Endothelial cell of umbilical vein (primary cell): ENCODE measurements at regions of chr6 and their contacts with region 1.

Region 1: DNA sequence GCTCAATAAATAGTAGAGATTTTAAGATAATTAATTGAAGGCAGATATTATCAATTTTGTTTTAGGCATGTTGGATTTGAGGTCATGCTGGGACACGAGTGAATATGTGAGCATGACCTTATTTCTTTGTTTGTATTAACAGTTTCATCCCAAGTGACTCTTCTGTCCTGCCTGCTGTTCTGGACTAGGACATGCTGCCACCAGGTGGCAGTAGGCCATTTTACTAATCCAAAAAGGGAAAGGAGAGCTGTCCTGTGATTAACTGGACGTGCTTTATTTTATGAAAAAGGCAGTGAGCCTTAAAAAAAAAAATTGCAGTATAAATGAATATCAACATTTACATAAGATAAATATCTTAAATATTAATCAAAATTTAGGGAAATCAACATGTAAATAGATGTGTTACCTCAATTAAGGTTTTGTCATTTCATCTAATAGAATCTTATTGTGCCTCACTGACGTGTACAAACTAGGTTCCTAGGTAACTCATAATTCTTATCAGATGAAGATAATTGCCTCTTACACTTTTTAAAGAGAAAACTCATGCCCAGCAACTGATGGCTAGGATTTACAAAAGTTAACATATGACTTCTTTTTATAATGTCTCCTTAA is 49.8 kb downstream of the FRK start:
- DNase-seq: peak; percentile 73
- H3K4me3 ChIP-seq: no peak overlapping the region
- H3K27ac ChIP-seq: no peak overlapping the region
- H3K4me1 ChIP-seq: peaks cover 11% of the 10 kb centered on the region
- H3K27me3 ChIP-seq: no peaks in the 10 kb centered on the region
- CTCF ChIP-seq: peak; percentile 72 to 81
- POLR2A ChIP-seq: no peak

Region 2: GRCh38 chr6:115287467-115287866 is 723.4 kb before region 1 on chr6:
- CTCF ChIA-PET with region 1: no interaction called
- POLR2A ChIA-PET with region 1: no interaction called
- dilution Hi-C with region 1: no loop called
- intact Hi-C with region 1: no loop called
- DNase-seq: no peak
- H3K4me3 ChIP-seq: no peak overlapping the region
- H3K27ac ChIP-seq: no peak overlapping the region
- H3K4me1 ChIP-seq: no peaks in the 10 kb centered on the region
- H3K27me3 ChIP-seq: no peaks in the 10 kb centered on the region
- CTCF ChIP-seq: no peak
- POLR2A ChIP-seq: no peak

Region 3: GRCh38 chr6:115982453-115982852 is 28.4 kb before region 1 on chr6:
- CTCF ChIA-PET with region 1: no interaction called
- POLR2A ChIA-PET with region 1: no interaction called
- dilution Hi-C with region 1: no loop called
- intact Hi-C with region 1: no loop called
- DNase-seq: no peak
- H3K4me3 ChIP-seq: no peak overlapping the region
- H3K27ac ChIP-seq: no peak overlapping the region
- H3K4me1 ChIP-seq: no peaks in the 10 kb centered on the region
- H3K27me3 ChIP-seq: no peaks in the 10 kb centered on the region
- CTCF ChIP-seq: no peak
- POLR2A ChIP-seq: no peak

Region 4: DNA sequence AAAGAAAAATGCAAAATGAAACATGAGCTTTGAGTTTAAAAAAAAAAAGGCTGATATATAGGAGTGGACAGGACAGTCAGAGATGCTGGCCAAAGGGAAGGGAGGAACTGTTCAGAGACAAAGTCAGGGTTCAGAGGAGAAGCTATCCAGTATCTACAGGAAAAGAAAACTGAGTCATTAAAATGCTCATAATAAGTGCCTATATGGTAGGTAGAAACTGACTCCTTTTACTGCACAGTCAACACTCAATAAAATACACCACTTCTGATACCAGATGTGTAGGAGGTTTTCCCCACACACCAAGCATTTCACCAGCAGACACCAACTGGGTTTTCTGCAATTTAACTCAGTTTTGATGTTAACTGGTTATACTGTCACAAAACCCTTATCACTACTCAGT is 16.9 kb after region 1 on chr6:
- CTCF ChIA-PET with region 1: interaction called, 13 read pairs
- POLR2A ChIA-PET with region 1: no interaction called
- dilution Hi-C with region 1: no loop called
- intact Hi-C with region 1: no loop called
- DNase-seq: no peak
- H3K4me3 ChIP-seq: no peak overlapping the region
- H3K27ac ChIP-seq: no peak overlapping the region
- H3K4me1 ChIP-seq: no peaks in the 10 kb centered on the region
- H3K27me3 ChIP-seq: no peaks in the 10 kb centered on the region
- CTCF ChIP-seq: no peak
- POLR2A ChIP-seq: no peak

Region 5: GRCh38 chr6:116073765-116074419 is 63.0 kb after region 1 on chr6:
- CTCF ChIA-PET with region 1: interaction called, 11 read pairs
- POLR2A ChIA-PET with region 1: no interaction called
- dilution Hi-C with region 1: no loop called
- intact Hi-C with region 1: no loop called
- DNase-seq: peak; percentile 20
- H3K4me3 ChIP-seq: no peak overlapping the region
- H3K27ac ChIP-seq: no peak overlapping the region
- H3K4me1 ChIP-seq: no peaks in the 10 kb centered on the region
- H3K27me3 ChIP-seq: no peaks in the 10 kb centered on the region
- CTCF ChIP-seq: no peak
- POLR2A ChIP-seq: no peak

Region 6: DNA sequence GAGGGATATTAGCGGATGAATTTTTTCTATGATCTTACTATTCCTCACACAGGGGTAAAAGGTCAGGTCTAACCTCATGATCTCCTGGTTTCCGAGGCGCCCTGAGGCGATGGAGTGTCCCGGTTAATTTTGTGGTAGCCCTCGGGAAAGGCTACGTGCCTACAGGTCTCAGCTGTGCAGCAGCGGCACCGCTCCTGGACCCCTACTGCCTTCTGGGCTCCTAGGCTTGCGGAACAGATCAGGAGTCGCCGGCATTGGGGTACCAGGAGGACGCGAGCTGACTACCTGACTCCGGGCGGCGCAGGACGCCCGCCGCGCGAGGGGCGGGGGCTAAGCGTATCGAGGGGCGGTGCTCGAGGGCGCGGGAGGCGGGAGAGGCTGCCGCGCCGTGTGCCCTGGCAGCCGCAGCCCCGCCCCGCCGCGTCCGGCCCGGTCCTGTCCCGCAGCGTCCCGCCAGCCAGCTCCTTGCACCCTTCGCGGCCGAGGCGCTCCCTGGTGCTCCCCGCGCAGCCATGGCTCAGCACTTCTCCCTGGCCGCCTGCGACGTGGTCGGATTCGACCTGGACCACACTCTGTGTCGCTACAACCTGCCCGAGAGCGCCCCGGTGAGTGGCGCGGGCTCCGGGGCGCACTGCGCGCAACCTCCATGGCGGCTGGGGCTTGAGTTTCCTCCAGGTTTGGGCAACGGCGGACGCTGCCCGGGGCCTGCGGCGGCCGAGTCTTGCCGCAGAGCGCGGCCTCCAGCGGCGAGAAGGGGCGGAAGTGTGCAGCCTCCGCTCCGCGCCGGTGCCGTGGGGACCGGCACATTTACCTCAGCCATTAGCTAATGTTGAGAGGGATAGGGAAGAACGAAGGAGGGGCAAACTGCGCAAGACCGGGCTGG is 89.8 kb after region 1 on chr6 and contains the start of gene NT5DC1:
- CTCF ChIA-PET with region 1: interaction called, 216 read pairs
- POLR2A ChIA-PET with region 1: no interaction called
- dilution Hi-C with region 1: no loop called
- intact Hi-C with region 1: loop called (anchors 1 kb)
- DNase-seq: peak; percentile 80
- H3K4me3 ChIP-seq: peak within 1 kb of the TSS; percentile 49 to 85 (median 62)
- H3K27ac ChIP-seq: peak within 1 kb of the TSS; percentile 36
- H3K4me1 ChIP-seq: peaks cover 11% of the 10 kb centered on the region
- H3K27me3 ChIP-seq: peaks cover 0 to 3% of the 10 kb centered on the region in 2 experiments
- CTCF ChIP-seq: peak in 1 of 2 donors; percentile 32
- POLR2A ChIP-seq: peak; percentile 63
- total RNA-seq, gene NT5DC1: 23.8 and 24.3 TPM in 2 replicates

Region 7: DNA sequence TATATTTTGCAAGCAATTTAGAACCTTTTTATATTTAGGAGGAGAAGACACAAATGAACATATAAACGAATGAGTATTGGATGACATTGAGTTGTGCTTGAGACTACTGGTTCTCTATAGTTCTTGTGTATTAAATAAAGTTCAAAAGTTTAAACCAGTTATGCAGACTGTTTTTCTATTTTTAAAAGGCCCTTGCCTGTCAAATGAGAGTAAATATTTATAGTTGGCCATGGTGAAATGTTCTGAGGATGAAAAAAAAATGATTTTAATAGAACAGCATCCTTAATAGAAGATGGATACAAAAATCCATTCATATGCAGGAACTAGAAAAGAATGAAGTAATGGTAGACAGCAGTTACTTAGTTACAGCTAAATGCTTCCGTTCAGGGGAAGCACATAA is 178.6 kb after region 1 on chr6:
- CTCF ChIA-PET with region 1: no interaction called
- POLR2A ChIA-PET with region 1: no interaction called
- dilution Hi-C with region 1: no loop called
- intact Hi-C with region 1: loop called (anchors 10 kb)
- DNase-seq: no peak
- H3K4me3 ChIP-seq: no peak overlapping the region
- H3K27ac ChIP-seq: no peak overlapping the region
- H3K4me1 ChIP-seq: no peaks in the 10 kb centered on the region
- H3K27me3 ChIP-seq: no peaks in the 10 kb centered on the region
- CTCF ChIP-seq: no peak
- POLR2A ChIP-seq: no peak